B cell (primary cell): ENCODE measurements at regions of chr20 and their contacts with region 1.

Region 1: GRCh38 chr20:41028348-41029148 is at the start of gene TOP1:
- DNase-seq: peak; percentile 100
- ATAC-seq: peak; percentile 98
- H3K4me3 ChIP-seq: peak within 1 kb of the TSS; percentile 73 to 94 (median 93)
- H3K4me3 Mint-ChIP-seq: peak within 1 kb of the TSS; percentile 93
- H3K27ac ChIP-seq: peak within 1 kb of the TSS; percentile 71 to 95
- H3K27ac Mint-ChIP-seq: peak within 1 kb of the TSS; percentile 97
- H3K4me1 ChIP-seq: peaks cover 38 to 40% of the 10 kb centered on the region in 2 donors
- H3K4me1 Mint-ChIP-seq: peaks cover 53% of the 10 kb centered on the region
- H3K27me3 ChIP-seq: no peaks in the 10 kb centered on the region
- H3K27me3 Mint-ChIP-seq: no peaks in the 10 kb centered on the region
- CTCF ChIP-seq: no peak
- total RNA-seq, gene TOP1: 44.9 and 45.9 TPM in 2 replicates

Region 2: DNA sequence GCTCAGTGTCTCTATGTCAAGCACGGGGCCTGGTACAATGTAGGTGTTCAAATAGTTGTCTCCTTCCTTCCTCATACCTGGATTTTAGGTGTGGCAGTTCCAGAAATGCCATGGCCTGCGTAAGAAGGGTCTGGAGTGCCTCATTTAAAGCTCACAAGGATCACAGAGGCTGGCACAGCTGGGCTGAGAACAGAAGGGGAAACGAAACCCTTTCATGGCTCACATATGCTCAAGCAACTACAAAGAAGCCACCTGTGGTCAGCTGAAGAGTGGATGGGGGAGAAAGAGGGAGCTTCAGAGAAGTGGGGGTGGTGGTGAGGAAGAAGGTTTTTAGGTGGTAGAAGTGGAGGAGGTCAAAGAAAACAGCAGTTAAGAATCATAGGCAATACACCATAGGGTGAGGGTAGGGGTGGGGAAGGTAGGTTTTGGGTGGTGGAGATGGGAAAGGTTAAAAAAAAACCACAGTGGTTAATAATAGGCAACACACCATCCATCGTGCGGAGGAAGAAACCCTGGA is 16.9 kb before region 1 on chr20:
- CTCF ChIA-PET with region 1: interaction called, 4 read pairs
- POLR2A ChIA-PET with region 1: interaction called, 10 read pairs
- intact Hi-C with region 1: loop called (anchors 1 kb)
- DNase-seq: peak; percentile 86
- ATAC-seq: peak; percentile 98
- H3K4me3 ChIP-seq: peak overlapping the region in 1 of 5 experiments; percentile 35
- H3K4me3 Mint-ChIP-seq: peak overlapping the region; percentile 52
- H3K27ac ChIP-seq: peak overlapping the region in 1 of 2 donors; percentile 4
- H3K27ac Mint-ChIP-seq: peak overlapping the region; percentile 47
- H3K4me1 ChIP-seq: peaks cover 36 to 43% of the 10 kb centered on the region in 2 donors
- H3K4me1 Mint-ChIP-seq: peaks cover 40% of the 10 kb centered on the region
- H3K27me3 ChIP-seq: no peaks in the 10 kb centered on the region
- H3K27me3 Mint-ChIP-seq: no peaks in the 10 kb centered on the region
- CTCF ChIP-seq: no peak

Region 3: DNA sequence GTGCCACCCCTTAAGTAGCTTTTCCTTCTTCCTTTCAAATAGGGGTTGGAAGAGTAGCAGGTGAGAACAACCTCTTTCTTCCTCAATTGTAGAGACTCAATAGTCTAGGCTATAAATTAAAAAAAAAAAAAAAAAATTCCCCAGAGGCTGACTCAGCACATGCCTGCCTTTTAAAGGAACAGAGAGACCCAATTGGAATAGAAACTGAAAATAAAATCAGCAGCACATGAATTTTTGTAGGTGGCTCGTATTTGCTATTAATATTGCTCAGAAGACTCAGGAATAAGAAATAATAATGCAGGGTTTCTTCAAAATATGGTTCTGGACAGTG is 19.4 kb after region 1 on chr20:
- CTCF ChIA-PET with region 1: interaction called, 5 read pairs
- POLR2A ChIA-PET with region 1: no interaction called
- intact Hi-C with region 1: loop called (anchors 1 kb)
- DNase-seq: peak; percentile 75
- ATAC-seq: peak; percentile 73
- H3K4me3 ChIP-seq: peak overlapping the region in 3 of 5 experiments; percentile 24 to 48 (median 27)
- H3K4me3 Mint-ChIP-seq: peak overlapping the region; percentile 80
- H3K27ac ChIP-seq: peak overlapping the region; percentile 3 to 14
- H3K27ac Mint-ChIP-seq: peak overlapping the region; percentile 80
- H3K4me1 ChIP-seq: peaks cover 56 to 62% of the 10 kb centered on the region in 2 donors
- H3K4me1 Mint-ChIP-seq: peaks cover 80% of the 10 kb centered on the region
- H3K27me3 ChIP-seq: no peaks in the 10 kb centered on the region
- H3K27me3 Mint-ChIP-seq: no peaks in the 10 kb centered on the region
- CTCF ChIP-seq: no peak

Region 4: DNA sequence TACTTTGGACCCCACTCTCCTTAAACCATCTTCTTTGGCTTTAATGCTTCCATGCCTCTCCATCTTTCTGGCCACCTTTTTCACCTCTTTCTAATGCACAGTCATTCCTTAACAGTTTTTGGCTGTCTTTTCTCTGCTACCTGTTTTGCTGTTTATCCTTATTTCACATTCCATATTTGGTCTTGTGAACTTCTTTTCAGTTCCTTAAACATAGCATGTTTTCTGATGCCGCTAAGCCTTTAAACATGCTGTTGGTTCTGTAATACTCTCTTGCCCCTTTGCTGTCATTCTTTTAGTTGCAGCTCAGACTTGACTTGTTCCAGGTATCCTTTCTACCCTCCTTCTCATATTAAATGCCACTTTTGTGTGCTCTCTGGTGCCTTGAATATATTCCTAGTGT is 35.8 kb after region 1 on chr20:
- CTCF ChIA-PET with region 1: interaction called, 4 read pairs
- POLR2A ChIA-PET with region 1: interaction called, 5 read pairs
- intact Hi-C with region 1: loop called (anchors 5 kb)
- DNase-seq: peak; percentile 39
- ATAC-seq: peak; percentile 57
- H3K4me3 ChIP-seq: no peak overlapping the region
- H3K4me3 Mint-ChIP-seq: peak overlapping the region; percentile 24
- H3K27ac ChIP-seq: no peak overlapping the region
- H3K27ac Mint-ChIP-seq: peak overlapping the region; percentile 27
- H3K4me1 ChIP-seq: peaks cover 19 to 23% of the 10 kb centered on the region in 2 donors
- H3K4me1 Mint-ChIP-seq: peaks cover 46% of the 10 kb centered on the region
- H3K27me3 ChIP-seq: no peaks in the 10 kb centered on the region
- H3K27me3 Mint-ChIP-seq: no peaks in the 10 kb centered on the region
- CTCF ChIP-seq: no peak

Region 5: GRCh38 chr20:41317536-41318270 is 289.2 kb after region 1 on chr20 and contains the start of gene ZHX3:
- CTCF ChIA-PET with region 1: no interaction called
- POLR2A ChIA-PET with region 1: no interaction called
- intact Hi-C with region 1: loop called (anchors 2 kb)
- DNase-seq: peak; percentile 98
- ATAC-seq: peak; percentile 95
- H3K4me3 ChIP-seq: peak within 1 kb of the TSS in 4 of 5 experiments; percentile 65 to 86 (median 74)
- H3K4me3 Mint-ChIP-seq: peak within 1 kb of the TSS; percentile 91
- H3K27ac ChIP-seq: peak within 1 kb of the TSS; percentile 63 to 76
- H3K27ac Mint-ChIP-seq: peak within 1 kb of the TSS; percentile 91
- H3K4me1 ChIP-seq: peaks cover 11 to 12% of the 10 kb centered on the region in 2 donors
- H3K4me1 Mint-ChIP-seq: peaks cover 22% of the 10 kb centered on the region
- H3K27me3 ChIP-seq: no peaks in the 10 kb centered on the region
- H3K27me3 Mint-ChIP-seq: no peaks in the 10 kb centered on the region
- CTCF ChIP-seq: no peak
- total RNA-seq, gene ZHX3: 22.2 and 24.4 TPM in 2 replicates

Region 6: GRCh38 chr20:41693136-41693979 is 664.8 kb after region 1 on chr20:
- CTCF ChIA-PET with region 1: no interaction called
- POLR2A ChIA-PET with region 1: no interaction called
- intact Hi-C with region 1: loop called (anchors 10 kb)
- DNase-seq: peak; percentile 92
- ATAC-seq: peak; percentile 79
- H3K4me3 ChIP-seq: peak overlapping the region; percentile 84 to 96 (median 96)
- H3K4me3 Mint-ChIP-seq: peak overlapping the region; percentile 88
- H3K27ac ChIP-seq: peak overlapping the region; percentile 81 to 86
- H3K27ac Mint-ChIP-seq: peak overlapping the region; percentile 93
- H3K4me1 ChIP-seq: peaks cover 8 to 17% of the 10 kb centered on the region in 2 donors
- H3K4me1 Mint-ChIP-seq: peaks cover 13% of the 10 kb centered on the region
- H3K27me3 ChIP-seq: peaks cover 0 to 4% (median 2%) of the 10 kb centered on the region in 4 experiments
- H3K27me3 Mint-ChIP-seq: peaks cover 7% of the 10 kb centered on the region
- CTCF ChIP-seq: peak; percentile 67